CD8-positive, alpha-beta T cell (primary cell): ENCODE measurements at regions of chr2 and their contacts with region 1.

Region 1: DNA sequence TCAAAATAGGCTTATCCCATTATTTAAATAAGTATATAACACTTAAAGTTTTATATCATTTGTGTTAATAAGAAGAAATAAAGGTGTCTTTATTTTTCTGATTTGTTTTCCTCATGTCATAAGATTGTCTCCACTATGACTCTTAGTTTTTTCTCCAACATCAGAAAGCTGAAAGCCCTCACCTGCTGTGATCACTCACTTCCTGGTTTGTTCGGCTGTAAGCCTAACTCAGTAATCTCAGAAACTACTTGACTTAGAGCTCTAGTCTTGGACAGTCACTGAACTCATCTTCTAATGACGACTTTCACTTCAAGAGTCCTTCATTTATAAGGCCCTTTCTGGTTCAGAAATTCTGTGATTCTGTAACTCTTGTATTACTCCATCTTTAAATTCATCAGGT is 311.0 kb downstream of the ZEB2 start:
- DNase-seq: no peak
- ATAC-seq: no peak
- H3K4me3 ChIP-seq: no peak overlapping the region
- H3K4me3 Mint-ChIP-seq: no peak overlapping the region
- H3K27ac ChIP-seq: no peak overlapping the region
- H3K27ac Mint-ChIP-seq: no peak overlapping the region
- H3K4me1 ChIP-seq: no peaks in the 10 kb centered on the region
- H3K4me1 Mint-ChIP-seq: peaks cover 11% of the 10 kb centered on the region
- H3K27me3 ChIP-seq: no peaks in the 10 kb centered on the region
- H3K27me3 Mint-ChIP-seq: no peaks in the 10 kb centered on the region
- CTCF ChIP-seq: no peak

Region 2: DNA sequence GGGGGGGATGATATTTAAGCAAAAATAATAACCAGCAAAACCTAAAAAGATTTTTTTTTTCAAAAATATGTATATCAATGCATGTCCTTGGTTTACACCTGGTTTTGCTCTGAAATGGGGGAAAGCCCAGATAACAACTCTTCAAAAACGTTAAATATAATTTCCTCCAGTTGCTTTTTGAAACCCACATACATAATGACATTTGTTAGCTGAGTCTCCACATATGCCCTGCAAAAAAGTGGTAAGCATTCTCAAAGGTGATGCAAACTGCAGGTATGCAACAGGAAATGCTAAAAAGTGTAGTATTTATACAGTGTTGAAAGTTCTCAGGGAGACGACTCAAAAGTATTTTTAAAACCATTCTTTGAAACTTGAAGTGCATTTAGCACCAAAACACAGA is 52.4 kb after region 1 on chr2:
- CTCF ChIA-PET with region 1: no interaction called
- POLR2A ChIA-PET with region 1: no interaction called
- intact Hi-C with region 1: loop called in 1 of 2 experiments (anchors 5 kb)
- DNase-seq: peak in 2 of 9 experiments; percentile 27 to 57
- ATAC-seq: peak; percentile 70
- H3K4me3 ChIP-seq: no peak overlapping the region
- H3K4me3 Mint-ChIP-seq: no peak overlapping the region
- H3K27ac ChIP-seq: peak overlapping the region in 1 of 2 experiments; percentile 0
- H3K27ac Mint-ChIP-seq: no peak overlapping the region
- H3K4me1 ChIP-seq: peaks cover 15% of the 10 kb centered on the region
- H3K4me1 Mint-ChIP-seq: peaks cover 34% of the 10 kb centered on the region
- H3K27me3 ChIP-seq: no peaks in the 10 kb centered on the region
- H3K27me3 Mint-ChIP-seq: no peaks in the 10 kb centered on the region
- CTCF ChIP-seq: no peak